ENCODE measurements at regions of chr3 and their contacts with region 1.

Region 1: GRCh38 chr3:123652346-123652984 is 67.6 kb upstream of the HACD2 start:
- DNase-seq: peak; percentile 80 to 85
- ATAC-seq: peak; percentile 87 to 97 (median 92)
- H3K4me3 ChIP-seq: no peak overlapping the region
- H3K27ac ChIP-seq: peak overlapping the region in 9 of 10 donors; percentile 58 to 83 (median 68)
- H3K4me1 ChIP-seq: peaks cover 11 to 37% (median 20%) of the 10 kb centered on the region in 9 donors
- H3K27me3 ChIP-seq: no peaks in the 10 kb centered on the region
- CTCF ChIP-seq: peak; percentile 85 to 98 (median 95)

Region 2: GRCh38 chr3:123700791-123701722 is 48.6 kb after region 1 on chr3:
- intact Hi-C with region 1: loop called in 9 of 10 experiments (anchors 1 to 5 kb)
- DNase-seq: peak in 1 of 2 donors; percentile 40
- ATAC-seq: peak; percentile 12 to 74 (median 58)
- H3K4me3 ChIP-seq: peak overlapping the region in 9 of 10 donors; percentile 13 to 54 (median 43)
- H3K27ac ChIP-seq: peak overlapping the region in 8 of 10 donors; percentile 13 to 74 (median 48)
- H3K4me1 ChIP-seq: peaks cover 3 to 35% (median 10%) of the 10 kb centered on the region in 9 donors
- H3K27me3 ChIP-seq: no peaks in the 10 kb centered on the region
- CTCF ChIP-seq: no peak

Region 3: GRCh38 chr3:123723522-123724168 is 71.2 kb after region 1 on chr3:
- intact Hi-C with region 1: loop called (anchors 1 to 5 kb)
- DNase-seq: peak in 1 of 2 donors; percentile 63
- ATAC-seq: peak in 6 of 8 donors; percentile 21 to 49 (median 46)
- H3K4me3 ChIP-seq: no peak overlapping the region
- H3K27ac ChIP-seq: no peak overlapping the region
- H3K4me1 ChIP-seq: peaks cover 3 to 33% (median 23%) of the 10 kb centered on the region in 9 donors
- H3K27me3 ChIP-seq: no peaks in the 10 kb centered on the region
- CTCF ChIP-seq: peak; percentile 76 to 86 (median 81)

Region 4: DNA sequence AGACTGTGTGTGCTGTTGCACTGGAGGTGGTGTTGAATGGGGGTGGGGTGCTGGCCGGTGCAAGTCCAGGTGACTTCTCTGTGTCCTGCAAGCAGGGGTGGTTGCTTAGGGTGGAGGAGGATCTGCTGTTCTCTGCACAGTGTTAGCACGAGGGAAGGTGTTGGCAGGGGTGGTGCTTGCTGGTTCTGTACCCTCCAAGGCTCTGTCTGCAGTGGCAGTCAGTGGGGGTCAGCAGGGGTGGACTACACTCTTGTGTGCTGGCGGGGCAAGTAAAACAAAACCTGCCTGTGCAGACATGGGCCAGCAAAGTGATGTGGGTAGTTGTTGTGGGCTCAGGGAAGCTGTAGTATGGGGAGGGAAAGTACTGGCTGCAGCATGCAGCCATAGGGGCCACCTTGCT is 334.0 kb after region 1 on chr3:
- intact Hi-C with region 1: loop called in 1 of 10 experiments (anchors 10 kb)
- DNase-seq: no peak
- ATAC-seq: peak in 1 of 8 donors; percentile 56
- H3K4me3 ChIP-seq: no peak overlapping the region
- H3K27ac ChIP-seq: no peak overlapping the region
- H3K4me1 ChIP-seq: peaks cover 0 to 7% (median 0%) of the 10 kb centered on the region in 9 donors
- H3K27me3 ChIP-seq: peaks cover 0 to 66% (median 10%) of the 10 kb centered on the region in 7 donors
- CTCF ChIP-seq: no peak

Measured in heart right ventricle (tissue), 16 donors.